Caco-2 (cell line): ENCODE measurements at regions of chr7 and their contacts with region 1.

Region 1: DNA sequence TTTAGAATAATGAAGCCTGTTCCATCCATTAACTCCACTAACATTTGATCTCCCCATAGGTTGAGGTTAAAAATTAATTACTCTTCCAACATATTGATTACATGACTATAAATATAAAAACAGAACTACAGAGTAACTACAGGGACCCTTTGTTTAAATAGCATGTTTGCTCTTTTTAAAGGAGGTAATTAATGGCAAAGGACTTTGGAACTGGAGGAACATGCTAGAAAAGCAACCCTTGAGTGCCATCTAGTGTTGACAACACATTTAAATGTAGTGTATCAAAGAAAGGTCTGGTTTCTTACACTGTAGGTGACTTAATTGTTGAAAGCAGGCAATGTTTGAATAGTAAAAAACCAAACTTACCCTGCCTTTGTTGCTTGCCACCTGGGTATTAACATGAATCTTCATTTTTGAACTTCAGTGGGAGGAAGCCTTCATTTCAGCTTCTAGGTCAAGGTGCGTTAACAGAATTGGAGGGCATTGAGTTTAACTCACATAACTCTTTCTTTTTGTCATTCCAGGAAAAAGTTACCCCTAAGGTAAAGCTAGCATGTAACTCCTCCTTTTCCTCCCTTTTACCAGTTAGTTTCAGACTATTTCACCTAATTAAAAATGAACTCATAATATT is 52.6 kb upstream of the CAPZA2 start:
- DNase-seq: peak; percentile 62 to 83
- H3K4me3 ChIP-seq: peak overlapping the region; percentile 13
- H3K4me3 Mint-ChIP-seq: peak overlapping the region; percentile 75
- H3K27ac Mint-ChIP-seq: peak overlapping the region; percentile 89
- H3K4me1 ChIP-seq: peaks cover 66% of the 10 kb centered on the region
- H3K4me1 Mint-ChIP-seq: peaks cover 45% of the 10 kb centered on the region
- H3K27me3 ChIP-seq: no peaks in the 10 kb centered on the region
- H3K27me3 Mint-ChIP-seq: no peaks in the 10 kb centered on the region
- CTCF ChIP-seq: peak; percentile 42 to 66

Region 2: GRCh38 chr7:115965796-115966475 is 843.8 kb before region 1 on chr7:
- CTCF ChIA-PET with region 1: no interaction called
- POLR2A ChIA-PET with region 1: no interaction called
- intact Hi-C with region 1: loop called (anchors 10 kb)
- DNase-seq: peak in 1 of 2 experiments; percentile 16
- H3K4me3 ChIP-seq: peak overlapping the region; percentile 21
- H3K4me3 Mint-ChIP-seq: peak overlapping the region; percentile 66
- H3K27ac Mint-ChIP-seq: peak overlapping the region; percentile 68
- H3K4me1 ChIP-seq: peaks cover 66% of the 10 kb centered on the region
- H3K4me1 Mint-ChIP-seq: peaks cover 37% of the 10 kb centered on the region
- H3K27me3 ChIP-seq: no peaks in the 10 kb centered on the region
- H3K27me3 Mint-ChIP-seq: no peaks in the 10 kb centered on the region
- CTCF ChIP-seq: no peak

Region 3: DNA sequence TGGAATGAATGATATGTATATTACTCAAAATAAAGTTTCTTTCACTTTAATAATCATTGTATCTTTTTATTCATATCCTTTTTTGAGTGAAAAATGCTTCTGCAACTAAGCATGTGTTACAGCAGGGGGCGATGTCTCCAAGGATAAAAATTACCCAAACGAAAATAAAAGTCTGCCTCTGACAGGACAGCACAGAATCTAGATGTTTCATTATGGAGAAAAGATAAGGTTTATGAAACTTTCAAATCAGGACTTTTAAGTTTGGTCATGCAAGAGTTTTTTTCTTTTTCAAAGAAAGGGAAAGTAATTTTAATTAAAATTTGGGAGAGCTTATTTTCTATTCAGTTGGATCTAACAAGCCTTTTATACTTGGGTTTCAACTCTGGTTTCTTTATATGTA is 551.0 kb before region 1 on chr7:
- CTCF ChIA-PET with region 1: no interaction called
- POLR2A ChIA-PET with region 1: no interaction called
- intact Hi-C with region 1: loop called (anchors 1 kb)
- DNase-seq: peak in 1 of 2 experiments; percentile 55
- H3K4me3 ChIP-seq: no peak overlapping the region
- H3K4me3 Mint-ChIP-seq: no peak overlapping the region
- H3K27ac Mint-ChIP-seq: no peak overlapping the region
- H3K4me1 ChIP-seq: peaks cover 12% of the 10 kb centered on the region
- H3K4me1 Mint-ChIP-seq: peaks cover 17% of the 10 kb centered on the region
- H3K27me3 ChIP-seq: no peaks in the 10 kb centered on the region
- H3K27me3 Mint-ChIP-seq: no peaks in the 10 kb centered on the region
- CTCF ChIP-seq: peak; percentile 72 to 83

Region 4: GRCh38 chr7:116525913-116526861 is 283.6 kb before region 1 on chr7:
- CTCF ChIA-PET with region 1: no interaction called
- POLR2A ChIA-PET with region 1: no interaction called
- intact Hi-C with region 1: loop called (anchors 1 kb)
- DNase-seq: peak; percentile 75 to 88
- H3K4me3 ChIP-seq: peak overlapping the region; percentile 60
- H3K4me3 Mint-ChIP-seq: peak overlapping the region; percentile 94
- H3K27ac Mint-ChIP-seq: peak overlapping the region; percentile 52
- H3K4me1 ChIP-seq: peaks cover 10% of the 10 kb centered on the region; the same call in 1 of the 2 replicates
- H3K4me1 Mint-ChIP-seq: no peaks in the 10 kb centered on the region
- H3K27me3 ChIP-seq: no peaks in the 10 kb centered on the region
- H3K27me3 Mint-ChIP-seq: no peaks in the 10 kb centered on the region
- CTCF ChIP-seq: peak; percentile 66 to 91

Region 5: DNA sequence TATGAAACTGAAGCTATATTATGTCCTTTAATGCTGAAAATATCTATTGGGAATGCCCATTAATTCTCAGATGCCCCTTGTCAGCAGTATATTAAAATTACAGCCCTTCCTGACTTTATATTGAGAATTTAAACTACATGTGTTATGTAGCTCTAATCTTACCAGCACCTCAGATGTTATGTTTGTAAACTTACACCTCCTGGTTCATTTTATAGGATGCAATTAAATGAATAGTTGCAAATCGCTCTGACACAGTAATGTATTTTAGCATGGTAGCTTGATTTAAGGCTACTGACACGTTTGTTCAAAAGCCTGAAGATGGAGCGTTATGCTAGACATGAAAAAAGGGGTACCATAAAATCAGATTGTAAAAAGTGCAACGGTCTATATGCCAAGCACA is 172.8 kb before region 1 on chr7:
- CTCF ChIA-PET with region 1: no interaction called
- POLR2A ChIA-PET with region 1: no interaction called
- intact Hi-C with region 1: no loop called
- DNase-seq: no peak
- H3K4me3 ChIP-seq: no peak overlapping the region
- H3K4me3 Mint-ChIP-seq: no peak overlapping the region
- H3K27ac Mint-ChIP-seq: no peak overlapping the region
- H3K4me1 ChIP-seq: no peaks in the 10 kb centered on the region
- H3K4me1 Mint-ChIP-seq: no peaks in the 10 kb centered on the region
- H3K27me3 ChIP-seq: no peaks in the 10 kb centered on the region
- H3K27me3 Mint-ChIP-seq: no peaks in the 10 kb centered on the region
- CTCF ChIP-seq: no peak

Region 6: GRCh38 chr7:116713918-116714317 is 95.8 kb before region 1 on chr7:
- CTCF ChIA-PET with region 1: no interaction called
- POLR2A ChIA-PET with region 1: no interaction called
- intact Hi-C with region 1: loop called (anchors 5 kb)
- DNase-seq: no peak
- H3K4me3 ChIP-seq: no peak overlapping the region
- H3K4me3 Mint-ChIP-seq: no peak overlapping the region
- H3K27ac Mint-ChIP-seq: no peak overlapping the region
- H3K4me1 ChIP-seq: peaks cover 19% of the 10 kb centered on the region
- H3K4me1 Mint-ChIP-seq: peaks cover 29% of the 10 kb centered on the region
- H3K27me3 ChIP-seq: no peaks in the 10 kb centered on the region
- H3K27me3 Mint-ChIP-seq: no peaks in the 10 kb centered on the region
- CTCF ChIP-seq: no peak

Region 7: DNA sequence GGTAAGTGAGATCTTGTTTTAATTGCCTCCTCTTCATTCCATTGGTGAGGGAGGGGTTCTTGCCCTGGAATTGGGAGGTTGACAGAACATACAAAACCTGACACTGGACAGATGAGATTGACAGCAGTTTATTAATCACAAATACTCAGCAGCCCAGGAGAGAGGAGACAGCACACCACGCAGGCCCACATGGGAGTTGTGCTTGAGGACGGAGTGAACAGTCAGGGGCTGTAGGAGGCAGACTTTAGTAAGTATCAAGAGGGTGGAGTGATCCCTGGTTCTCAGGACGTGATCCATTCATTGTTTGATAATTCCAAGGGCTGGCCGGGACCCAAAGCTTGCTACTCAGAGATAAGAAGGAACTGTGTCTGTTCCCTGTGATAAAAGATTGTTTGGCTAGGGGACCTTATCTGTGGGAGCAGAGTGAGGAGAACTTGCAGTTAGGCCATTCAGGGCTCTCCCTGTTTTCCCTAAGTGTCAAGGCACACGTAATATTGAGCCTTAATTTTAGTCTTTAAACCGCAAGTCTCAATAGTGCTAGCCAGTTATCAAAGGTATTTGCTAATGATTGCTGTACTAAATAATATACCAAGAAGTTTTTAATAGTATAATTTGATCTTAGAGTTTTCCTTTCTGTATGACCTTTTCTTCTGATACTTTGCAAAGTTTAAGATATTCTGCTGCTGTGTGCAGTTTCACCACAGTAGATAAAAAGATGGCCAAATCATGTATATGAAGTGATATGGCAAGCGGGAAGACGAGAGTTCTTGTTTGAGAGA is 67.1 kb after region 1 on chr7:
- CTCF ChIA-PET with region 1: no interaction called
- POLR2A ChIA-PET with region 1: no interaction called
- intact Hi-C with region 1: loop called (anchors 5 kb)
- DNase-seq: peak; percentile 36 to 55
- H3K4me3 ChIP-seq: no peak overlapping the region
- H3K4me3 Mint-ChIP-seq: no peak overlapping the region
- H3K27ac Mint-ChIP-seq: no peak overlapping the region
- H3K4me1 ChIP-seq: peaks cover 23% of the 10 kb centered on the region
- H3K4me1 Mint-ChIP-seq: peaks cover under 1% of the 10 kb centered on the region
- H3K27me3 ChIP-seq: no peaks in the 10 kb centered on the region
- H3K27me3 Mint-ChIP-seq: no peaks in the 10 kb centered on the region
- CTCF ChIP-seq: no peak